GM13976 (cell line): ENCODE measurements at regions of chr7 and their contacts with region 1.

Region 1: GRCh38 chr7:101542527-101543241 is 86.4 kb downstream of the MYL10 start:
- DNase-seq: peak; percentile 80
- CTCF ChIP-seq: peak; percentile 86

Region 2: GRCh38 chr7:101265622-101266516 is 276.8 kb before region 1 on chr7:
- in situ Hi-C with region 1: no loop called
- DNase-seq: no peak
- CTCF ChIP-seq: no peak

Region 3: DNA sequence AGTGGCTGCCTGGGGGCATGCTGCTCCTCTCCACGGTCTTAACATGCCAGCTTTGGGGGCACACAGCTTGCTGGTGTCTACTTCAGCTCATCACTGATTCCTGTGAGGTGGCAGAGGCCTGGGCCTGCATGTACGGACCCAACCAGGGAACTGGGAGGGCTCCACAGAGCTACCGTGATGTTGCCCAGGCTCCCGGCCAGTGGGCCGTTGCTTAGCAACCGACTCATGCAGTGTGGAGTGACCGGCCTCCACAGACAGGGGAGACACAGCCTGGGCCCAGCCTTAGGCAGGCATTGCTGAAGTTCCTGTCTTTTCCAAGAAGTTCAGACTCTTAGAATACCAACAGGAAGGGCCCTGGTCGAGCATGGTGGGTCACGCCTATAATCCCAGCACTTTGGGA is 718.2 kb after region 1 on chr7:
- in situ Hi-C with region 1: loop called (anchors 10 kb)
- DNase-seq: no peak
- CTCF ChIP-seq: no peak

Region 4: GRCh38 chr7:102396027-102397019 is 853.6 kb after region 1 on chr7 and contains the start of gene PRKRIP1:
- in situ Hi-C with region 1: loop called (anchors 25 kb)
- DNase-seq: peak; percentile 96
- CTCF ChIP-seq: no peak